ENCODE measurements at regions of chr18 and their contacts with region 1.

Region 1: DNA sequence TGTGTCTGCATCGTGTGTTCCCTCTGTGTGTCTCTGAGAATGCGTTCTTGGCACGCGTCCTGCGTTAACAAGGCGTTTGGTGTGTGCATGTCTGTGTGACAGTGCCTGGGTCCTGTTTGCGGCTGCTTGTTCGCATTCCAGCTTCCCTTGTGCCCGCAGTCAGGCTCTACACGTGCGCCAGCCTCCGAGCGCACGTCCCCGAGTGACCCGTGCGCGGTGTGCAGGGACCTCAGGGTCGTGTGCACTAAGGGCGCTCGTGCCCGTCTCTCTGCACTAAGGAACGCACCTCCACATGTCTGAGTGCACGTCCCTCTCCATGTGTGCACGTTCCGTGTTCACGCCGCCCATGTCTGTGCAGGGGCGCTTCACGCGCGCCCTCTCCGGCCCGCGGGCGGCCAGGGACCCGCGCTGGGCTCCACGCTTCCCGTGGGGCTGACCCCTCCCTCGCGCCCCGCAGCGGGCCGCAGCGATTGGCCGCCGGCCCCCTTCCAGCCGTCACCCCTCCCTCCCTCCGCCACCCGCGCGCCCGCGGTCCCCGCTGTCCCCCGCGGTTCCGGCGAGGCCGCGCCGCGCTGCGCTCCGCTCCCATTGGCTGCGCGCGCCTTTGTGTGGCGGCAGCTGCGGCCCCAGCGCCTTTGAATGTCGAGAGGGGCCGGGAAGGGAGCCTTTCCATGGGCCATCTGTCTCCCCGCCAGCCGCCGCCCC is 229.4 kb downstream of the HAUS1 start:
- DNase-seq: peak in 1 of 2 experiments; percentile 43
- H3K4me3 ChIP-seq: peak overlapping the region; percentile 55
- H3K27ac ChIP-seq: peak overlapping the region; percentile 32
- H3K4me1 ChIP-seq: peaks cover 34% of the 10 kb centered on the region
- H3K27me3 ChIP-seq: no peaks in the 10 kb centered on the region
- CTCF ChIP-seq: no peak

Region 2: DNA sequence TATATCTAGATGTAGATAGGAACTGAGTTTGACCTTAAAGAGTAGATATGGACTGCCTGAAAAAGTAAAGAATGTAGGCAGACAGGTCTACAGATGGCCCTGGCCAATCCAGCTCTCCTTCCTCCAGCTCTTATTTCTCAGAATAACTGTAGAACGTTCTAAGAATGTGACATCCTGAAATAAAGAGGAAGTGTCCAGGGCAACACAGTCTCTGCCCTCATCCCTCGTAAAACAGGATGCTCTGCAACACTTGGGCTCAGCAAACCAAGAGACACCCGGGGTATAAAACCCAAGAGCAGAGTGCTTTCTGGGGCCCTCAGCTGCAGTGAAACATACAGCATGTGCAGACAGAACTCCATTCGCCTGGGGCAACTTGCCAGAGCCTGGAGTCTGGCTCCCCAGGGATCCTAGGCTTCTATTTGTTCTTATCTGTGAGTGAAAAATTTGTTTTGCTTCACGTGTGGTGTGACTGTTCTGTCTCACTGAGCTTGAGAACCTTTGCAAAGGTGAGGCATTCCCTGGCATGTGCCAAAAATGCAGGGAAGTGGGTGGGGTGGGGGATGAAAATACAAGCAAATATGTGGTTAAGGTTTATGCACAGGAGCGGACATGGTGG is 1251.9 kb before region 1 on chr18:
- CTCF ChIA-PET with region 1: no interaction called
- POLR2A ChIA-PET with region 1: no interaction called
- intact Hi-C with region 1: no loop called
- DNase-seq: no peak
- H3K4me3 ChIP-seq: no peak overlapping the region
- H3K27ac ChIP-seq: no peak overlapping the region
- H3K4me1 ChIP-seq: no peaks in the 10 kb centered on the region
- H3K27me3 ChIP-seq: no peaks in the 10 kb centered on the region
- CTCF ChIP-seq: no peak

Region 3: GRCh38 chr18:46293761-46294228 is 39.8 kb before region 1 on chr18:
- CTCF ChIA-PET with region 1: no interaction called
- POLR2A ChIA-PET with region 1: no interaction called
- intact Hi-C with region 1: loop called (anchors 1 kb)
- DNase-seq: peak; percentile 85 to 98
- H3K4me3 ChIP-seq: peak overlapping the region; percentile 45; the same call in 1 of the 2 replicates
- H3K27ac ChIP-seq: peak overlapping the region; percentile 97
- H3K4me1 ChIP-seq: peaks cover 75% of the 10 kb centered on the region
- H3K27me3 ChIP-seq: no peaks in the 10 kb centered on the region
- CTCF ChIP-seq: no peak

Region 4: GRCh38 chr18:46374863-46375262 is 41.3 kb after region 1 on chr18:
- CTCF ChIA-PET with region 1: interaction called, 6 read pairs
- POLR2A ChIA-PET with region 1: interaction called, 3 read pairs
- intact Hi-C with region 1: loop called (anchors 2 kb)
- DNase-seq: peak; percentile 76 to 77
- H3K4me3 ChIP-seq: no peak overlapping the region
- H3K27ac ChIP-seq: no peak overlapping the region
- H3K4me1 ChIP-seq: peaks cover 13% of the 10 kb centered on the region; the same call in 1 of the 2 replicates
- H3K27me3 ChIP-seq: no peaks in the 10 kb centered on the region
- CTCF ChIP-seq: no peak

Region 5: GRCh38 chr18:46574000-46574742 is 240.6 kb after region 1 on chr18:
- CTCF ChIA-PET with region 1: no interaction called
- POLR2A ChIA-PET with region 1: no interaction called
- intact Hi-C with region 1: no loop called
- DNase-seq: no peak
- H3K4me3 ChIP-seq: no peak overlapping the region
- H3K27ac ChIP-seq: no peak overlapping the region
- H3K4me1 ChIP-seq: no peaks in the 10 kb centered on the region
- H3K27me3 ChIP-seq: peaks cover 86% of the 10 kb centered on the region
- CTCF ChIP-seq: no peak

Measured in PC-9 (cell line).